HEK293 (cell line): ENCODE measurements at regions of chr2 and their contacts with region 1.

Region 1: GRCh38 chr2:241734467-241735208 is at the start of gene D2HGDH:
- H3K4me3 ChIP-seq: peak within 1 kb of the TSS; percentile 78
- H3K27ac ChIP-seq: peak within 1 kb of the TSS; percentile 83; the same call in 1 of the 2 replicates
- H3K4me1 ChIP-seq: no peaks in the 10 kb centered on the region
- CTCF ChIP-seq: no peak

Region 2: DNA sequence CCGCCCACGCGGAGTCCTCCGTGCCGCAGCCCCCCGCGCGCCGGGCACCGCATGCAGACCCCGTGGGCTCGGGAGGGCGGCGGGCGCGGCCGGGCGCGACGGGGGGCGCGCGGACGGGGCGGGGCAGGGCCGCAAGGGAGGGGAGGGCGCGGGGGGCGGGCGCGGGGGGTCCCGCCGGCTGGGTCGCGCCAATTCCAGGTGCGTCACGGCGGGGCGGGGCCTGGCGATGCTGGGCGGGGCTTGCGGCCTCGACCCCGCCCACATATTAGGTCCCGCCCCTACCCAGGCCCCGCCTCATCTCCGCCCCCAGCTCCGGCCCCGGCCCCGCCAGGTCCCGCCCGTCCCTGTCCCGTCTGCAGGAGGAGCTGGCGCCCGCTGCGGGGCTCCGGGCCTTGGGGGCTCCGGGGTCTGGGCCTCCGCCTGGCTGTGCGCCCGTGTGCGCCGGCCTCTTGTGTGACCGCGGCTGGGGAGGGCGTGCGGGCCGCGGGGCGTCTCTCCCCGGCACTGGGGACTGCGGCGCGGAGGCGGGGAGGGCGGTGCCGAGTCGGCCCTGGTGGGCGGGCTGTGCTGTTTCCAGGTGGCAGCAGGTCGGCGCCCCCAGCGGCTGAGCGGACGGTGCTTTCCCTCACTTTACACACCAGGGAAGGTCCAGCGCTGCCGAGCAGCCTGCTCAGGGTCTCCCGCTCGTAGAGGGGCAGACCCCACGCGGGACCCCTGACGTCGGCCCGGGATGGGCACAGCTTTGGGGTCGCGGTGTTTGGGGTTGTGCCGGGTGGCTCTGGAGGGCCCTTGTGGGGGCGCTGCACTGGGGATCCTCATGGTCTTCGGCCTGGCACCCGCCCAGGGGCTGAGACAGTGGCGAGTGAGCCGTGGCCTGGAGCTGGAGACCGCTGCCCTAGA is 32.3 kb before region 1 on chr2:
- CTCF ChIA-PET with region 1: interaction called, 5 read pairs
- POLR2A ChIA-PET with region 1: interaction called, 15 read pairs
- H3K4me3 ChIP-seq: peak overlapping the region; percentile 70
- H3K27ac ChIP-seq: peak overlapping the region; percentile 89
- H3K4me1 ChIP-seq: peaks cover 6% of the 10 kb centered on the region
- CTCF ChIP-seq: peak; percentile 98